Left cardiac atrium (tissue), 4 donors: ENCODE measurements at regions of chr2 and their contacts with region 1.

Region 1: DNA sequence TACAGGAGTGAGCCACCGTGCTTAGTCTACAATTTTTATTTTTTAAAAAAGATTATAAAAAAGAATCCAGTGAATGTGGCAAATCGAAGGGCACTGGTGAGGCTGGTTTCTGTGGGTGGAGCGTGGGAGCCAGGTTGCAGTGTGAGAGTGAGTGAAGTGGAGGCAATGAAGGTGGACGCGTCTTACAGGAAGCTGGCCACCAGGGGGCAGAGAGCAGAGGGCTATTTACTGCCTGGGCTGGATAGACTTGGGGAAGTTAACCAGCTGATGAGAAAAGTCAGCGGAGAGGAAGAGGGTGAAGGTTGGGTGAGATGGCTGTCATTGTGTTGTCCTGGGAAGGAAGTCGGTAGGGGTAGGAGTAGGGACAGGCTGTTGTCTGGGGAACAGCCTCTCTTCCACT is 6.8 kb downstream of the SCTR start:
- DNase-seq: peak; percentile 56
- ATAC-seq: peak in 1 of 2 donors; percentile 76

Region 2: DNA sequence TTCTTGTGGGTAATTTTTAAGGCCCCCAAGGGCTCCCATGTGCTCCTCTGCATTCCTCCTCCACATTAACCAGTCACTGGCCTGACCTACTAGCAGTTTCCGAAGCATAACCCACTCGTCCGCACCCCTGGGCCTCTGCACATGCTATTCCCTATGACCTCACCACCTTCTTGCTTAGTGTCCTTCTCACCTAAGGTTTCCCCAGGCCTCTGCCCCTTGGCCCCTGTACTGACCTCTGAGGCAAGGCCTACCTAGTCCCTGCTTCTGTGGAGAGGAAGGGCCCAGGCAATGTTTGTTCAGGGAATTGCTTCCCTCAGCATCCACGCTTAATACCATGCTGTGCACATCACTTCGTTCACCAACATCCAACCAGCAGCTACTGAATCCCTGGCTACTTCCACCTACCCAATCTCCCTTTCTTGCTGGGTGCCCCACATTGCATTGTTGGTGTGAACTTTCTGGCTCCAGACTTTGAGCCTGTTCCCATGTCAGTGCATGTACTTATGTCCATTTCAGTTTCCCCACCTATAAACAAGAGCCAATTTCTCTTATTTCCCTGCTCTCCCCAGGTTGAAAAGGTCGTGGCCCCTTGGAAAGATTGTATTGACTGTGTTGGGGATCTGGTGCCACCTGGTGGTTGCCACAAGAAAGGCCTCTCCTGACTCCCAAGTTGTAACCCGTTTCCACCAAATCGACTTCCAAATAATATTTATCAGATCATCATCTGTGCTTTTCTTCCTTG is 142.3 kb after region 1 on chr2:
- intact Hi-C with region 1: loop called in 1 of 2 experiments (anchors 2 kb)
- DNase-seq: peak; percentile 47
- ATAC-seq: no peak